CD4-positive, alpha-beta T cell (primary cell): ENCODE measurements at regions of chr9 and their contacts with region 1.

Region 1: GRCh38 chr9:34665381-34666250 is 3.2 kb upstream of the CCL27 start:
- DNase-seq: peak; percentile 81 to 97 (median 88)
- ATAC-seq: peak; percentile 79
- H3K4me3 ChIP-seq: peak overlapping the region; percentile 90
- H3K4me3 Mint-ChIP-seq: peak overlapping the region; percentile 97
- H3K27ac ChIP-seq: peak overlapping the region; percentile 95 to 99
- H3K27ac Mint-ChIP-seq: peak overlapping the region; percentile 99
- H3K4me1 ChIP-seq: peaks cover 55% of the 10 kb centered on the region
- H3K4me1 Mint-ChIP-seq: peaks cover 52% of the 10 kb centered on the region
- H3K27me3 ChIP-seq: no peaks in the 10 kb centered on the region
- H3K27me3 Mint-ChIP-seq: no peaks in the 10 kb centered on the region
- CTCF ChIP-seq: no peak

Region 2: GRCh38 chr9:34611829-34612630 is 53.6 kb before region 1 on chr9 and contains the start of gene RPP25L:
- CTCF ChIA-PET with region 1: no interaction called
- POLR2A ChIA-PET with region 1: no interaction called
- intact Hi-C with region 1: loop called (anchors 1 to 2 kb)
- DNase-seq: peak; percentile 64 to 94 (median 82)
- ATAC-seq: peak; percentile 91
- H3K4me3 ChIP-seq: peak within 1 kb of the TSS; percentile 95
- H3K4me3 Mint-ChIP-seq: peak within 1 kb of the TSS; percentile 84
- H3K27ac ChIP-seq: peak within 1 kb of the TSS; percentile 79 to 83
- H3K27ac Mint-ChIP-seq: peak within 1 kb of the TSS; percentile 40
- H3K4me1 ChIP-seq: peaks cover 28% of the 10 kb centered on the region
- H3K4me1 Mint-ChIP-seq: peaks cover 24% of the 10 kb centered on the region
- H3K27me3 ChIP-seq: no peaks in the 10 kb centered on the region
- H3K27me3 Mint-ChIP-seq: no peaks in the 10 kb centered on the region
- CTCF ChIP-seq: no peak
- total RNA-seq, gene RPP25L: 4.6 to 5.7 TPM

Region 3: GRCh38 chr9:34701769-34702736 is 36.4 kb after region 1 on chr9:
- CTCF ChIA-PET with region 1: interaction called, 20 read pairs
- POLR2A ChIA-PET with region 1: no interaction called
- intact Hi-C with region 1: loop called (anchors 1 to 2 kb)
- DNase-seq: peak; percentile 70 to 88 (median 78)
- ATAC-seq: peak; percentile 82
- H3K4me3 ChIP-seq: peak overlapping the region; percentile 54
- H3K4me3 Mint-ChIP-seq: peak overlapping the region; percentile 87
- H3K27ac ChIP-seq: no peak overlapping the region
- H3K27ac Mint-ChIP-seq: no peak overlapping the region
- H3K4me1 ChIP-seq: peaks cover 12% of the 10 kb centered on the region
- H3K4me1 Mint-ChIP-seq: peaks cover 14% of the 10 kb centered on the region
- H3K27me3 ChIP-seq: no peaks in the 10 kb centered on the region
- H3K27me3 Mint-ChIP-seq: peaks cover 8% of the 10 kb centered on the region
- CTCF ChIP-seq: peak; percentile 85

Region 4: DNA sequence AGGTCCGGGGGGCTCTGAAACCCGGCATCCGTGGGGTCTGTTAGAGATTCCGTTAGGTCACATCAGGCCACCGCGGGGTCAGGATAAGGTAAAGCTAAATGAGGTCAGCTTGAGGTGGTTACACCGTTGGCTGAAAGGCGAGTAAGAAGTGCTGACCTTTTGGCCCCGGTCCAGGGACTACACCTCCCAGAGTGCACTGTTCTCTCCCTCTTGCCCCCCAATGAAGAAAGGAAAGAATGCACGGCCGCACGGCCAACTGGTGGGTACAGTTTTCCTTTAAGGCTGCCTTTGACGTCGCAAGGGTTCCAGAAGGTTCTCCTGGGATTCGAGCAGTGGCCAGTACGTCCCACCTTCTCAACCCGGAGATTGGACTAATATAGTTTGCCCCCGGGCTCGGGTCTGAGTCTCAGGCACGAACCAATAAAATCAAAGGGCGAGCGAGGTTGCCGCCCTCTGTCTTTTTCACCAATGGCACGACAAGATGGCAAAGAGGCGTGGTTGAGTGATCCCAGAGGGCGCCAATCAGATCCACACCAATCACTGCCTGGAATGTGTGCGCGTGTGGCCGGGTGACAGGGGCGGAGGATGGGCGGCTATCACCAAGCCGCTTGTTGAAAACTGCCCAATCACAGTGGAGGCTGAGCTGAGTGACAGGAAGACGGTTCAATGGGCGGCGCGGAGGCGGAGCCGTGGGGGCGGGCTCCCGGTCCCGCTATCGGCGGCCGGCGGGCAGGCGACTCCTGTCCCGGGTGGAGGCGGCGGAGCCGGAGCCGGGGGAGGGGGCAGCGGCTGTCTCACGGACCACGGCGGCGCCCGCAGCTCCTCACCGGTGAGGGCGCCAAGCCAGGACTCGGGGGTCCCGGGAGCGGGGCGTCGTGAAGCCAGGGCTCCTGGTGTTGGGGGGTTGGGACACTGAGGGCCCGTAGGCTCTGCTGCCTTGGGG is 323.7 kb after region 1 on chr9 and contains the start of gene DNAJB5:
- CTCF ChIA-PET with region 1: no interaction called
- POLR2A ChIA-PET with region 1: no interaction called
- intact Hi-C with region 1: loop called in 1 of 2 experiments (anchors 5 kb)
- DNase-seq: peak; percentile 93 to 99 (median 95)
- ATAC-seq: peak; percentile 90
- H3K4me3 ChIP-seq: peak within 1 kb of the TSS; percentile 78
- H3K4me3 Mint-ChIP-seq: peak within 1 kb of the TSS; percentile 94
- H3K27ac ChIP-seq: peak within 1 kb of the TSS; percentile 62 to 63
- H3K27ac Mint-ChIP-seq: peak within 1 kb of the TSS; percentile 84
- H3K4me1 ChIP-seq: peaks cover 51% of the 10 kb centered on the region
- H3K4me1 Mint-ChIP-seq: peaks cover 51% of the 10 kb centered on the region
- H3K27me3 ChIP-seq: no peaks in the 10 kb centered on the region
- H3K27me3 Mint-ChIP-seq: no peaks in the 10 kb centered on the region
- CTCF ChIP-seq: no peak
- total RNA-seq, gene DNAJB5: 2.7 to 2.8 TPM

Region 5: GRCh38 chr9:35035851-35036701 is 370.5 kb after region 1 on chr9:
- CTCF ChIA-PET with region 1: no interaction called
- POLR2A ChIA-PET with region 1: no interaction called
- intact Hi-C with region 1: no loop called
- DNase-seq: peak; percentile 11 to 65 (median 40)
- ATAC-seq: peak; percentile 84
- H3K4me3 ChIP-seq: peak overlapping the region; percentile 42
- H3K4me3 Mint-ChIP-seq: peak overlapping the region; percentile 76
- H3K27ac ChIP-seq: no peak overlapping the region
- H3K27ac Mint-ChIP-seq: peak overlapping the region; percentile 76
- H3K4me1 ChIP-seq: peaks cover 10% of the 10 kb centered on the region
- H3K4me1 Mint-ChIP-seq: peaks cover 15% of the 10 kb centered on the region
- H3K27me3 ChIP-seq: no peaks in the 10 kb centered on the region
- H3K27me3 Mint-ChIP-seq: no peaks in the 10 kb centered on the region
- CTCF ChIP-seq: no peak

Region 6: DNA sequence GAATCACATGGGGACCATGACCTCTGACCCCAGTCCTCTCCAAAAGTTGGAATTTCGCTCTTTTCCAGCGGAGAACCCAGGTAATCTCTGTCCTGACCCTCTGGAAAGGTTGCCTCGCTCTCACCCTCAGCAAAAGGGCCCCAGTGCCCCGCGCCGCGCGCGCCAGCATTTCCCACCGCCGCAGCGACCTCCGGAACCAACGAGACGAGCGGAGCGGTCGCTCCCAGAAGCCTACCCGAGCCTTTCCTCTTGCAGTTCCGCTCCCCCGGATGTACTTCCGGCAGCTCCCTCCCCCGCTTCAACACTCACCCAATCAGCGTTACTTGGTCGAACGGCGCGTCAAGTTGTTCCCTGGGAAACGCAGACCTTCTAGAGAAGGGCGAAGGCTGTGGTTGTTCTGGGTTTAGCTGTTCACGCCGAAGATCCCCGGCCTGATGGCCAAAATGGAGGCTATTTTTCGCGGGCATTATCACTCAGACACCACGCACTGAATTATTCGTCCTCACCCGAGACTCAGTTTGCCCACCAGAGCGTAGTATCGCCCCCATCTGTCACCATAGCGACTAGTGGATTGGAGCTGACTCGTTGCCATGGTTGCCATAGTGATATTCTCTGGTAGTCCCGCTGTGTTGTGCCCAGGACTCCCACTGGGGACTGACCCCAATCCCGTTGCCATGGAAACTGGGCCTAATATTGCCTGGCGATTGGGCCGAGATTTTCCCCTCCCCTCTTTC is 437.5 kb after region 1 on chr9 and contains the start of gene STOML2:
- CTCF ChIA-PET with region 1: no interaction called
- POLR2A ChIA-PET with region 1: no interaction called
- intact Hi-C with region 1: loop called in 1 of 2 experiments (anchors 5 kb)
- DNase-seq: peak; percentile 84 to 97 (median 90)
- ATAC-seq: peak; percentile 98
- H3K4me3 ChIP-seq: peak within 1 kb of the TSS; percentile 99
- H3K4me3 Mint-ChIP-seq: peak within 1 kb of the TSS; percentile 92
- H3K27ac ChIP-seq: peak within 1 kb of the TSS; percentile 77 to 94
- H3K27ac Mint-ChIP-seq: peak within 1 kb of the TSS; percentile 89
- H3K4me1 ChIP-seq: peaks cover 28% of the 10 kb centered on the region
- H3K4me1 Mint-ChIP-seq: peaks cover 36% of the 10 kb centered on the region
- H3K27me3 ChIP-seq: no peaks in the 10 kb centered on the region
- H3K27me3 Mint-ChIP-seq: no peaks in the 10 kb centered on the region
- CTCF ChIP-seq: no peak
- total RNA-seq, gene STOML2: 29.8 to 30.5 TPM